ENCODE measurements at regions of chr1 and their contacts with region 1.

Region 1: GRCh38 chr1:43946236-43947060 is at the start of gene IPO13:
- DNase-seq: peak; percentile 92 to 98 (median 96)
- H3K4me3 ChIP-seq: peak within 1 kb of the TSS; percentile 58 to 99 (median 93)
- H3K27ac ChIP-seq: peak within 1 kb of the TSS; percentile 92 to 100 (median 99)
- H3K27me3 ChIP-seq: no peaks in the 10 kb centered on the region
- CTCF ChIP-seq: peak; percentile 66 to 97 (median 90)
- total RNA-seq, gene IPO13: 48.0 to 243 (median 94.5) TPM

Region 2: GRCh38 chr1:43974443-43975248 is 28.2 kb after region 1 on chr1 and contains the start of gene ATP6V0B:
- intact Hi-C with region 1: loop called (anchors 1 kb)
- DNase-seq: peak; percentile 96 to 100 (median 98)
- H3K4me3 ChIP-seq: peak within 1 kb of the TSS; percentile 67 to 99 (median 94)
- H3K27ac ChIP-seq: peak within 1 kb of the TSS; percentile 81 to 98 (median 93)
- H3K27me3 ChIP-seq: no peaks in the 10 kb centered on the region
- CTCF ChIP-seq: peak in 54 of 56 donors; percentile 9 to 81 (median 58)
- total RNA-seq, gene ATP6V0B: 112 to 276 (median 202) TPM

Measured in dorsolateral prefrontal cortex (tissue), 120 donors.